ENCODE measurements at regions of chr12 and their contacts with region 1.

Region 1: DNA sequence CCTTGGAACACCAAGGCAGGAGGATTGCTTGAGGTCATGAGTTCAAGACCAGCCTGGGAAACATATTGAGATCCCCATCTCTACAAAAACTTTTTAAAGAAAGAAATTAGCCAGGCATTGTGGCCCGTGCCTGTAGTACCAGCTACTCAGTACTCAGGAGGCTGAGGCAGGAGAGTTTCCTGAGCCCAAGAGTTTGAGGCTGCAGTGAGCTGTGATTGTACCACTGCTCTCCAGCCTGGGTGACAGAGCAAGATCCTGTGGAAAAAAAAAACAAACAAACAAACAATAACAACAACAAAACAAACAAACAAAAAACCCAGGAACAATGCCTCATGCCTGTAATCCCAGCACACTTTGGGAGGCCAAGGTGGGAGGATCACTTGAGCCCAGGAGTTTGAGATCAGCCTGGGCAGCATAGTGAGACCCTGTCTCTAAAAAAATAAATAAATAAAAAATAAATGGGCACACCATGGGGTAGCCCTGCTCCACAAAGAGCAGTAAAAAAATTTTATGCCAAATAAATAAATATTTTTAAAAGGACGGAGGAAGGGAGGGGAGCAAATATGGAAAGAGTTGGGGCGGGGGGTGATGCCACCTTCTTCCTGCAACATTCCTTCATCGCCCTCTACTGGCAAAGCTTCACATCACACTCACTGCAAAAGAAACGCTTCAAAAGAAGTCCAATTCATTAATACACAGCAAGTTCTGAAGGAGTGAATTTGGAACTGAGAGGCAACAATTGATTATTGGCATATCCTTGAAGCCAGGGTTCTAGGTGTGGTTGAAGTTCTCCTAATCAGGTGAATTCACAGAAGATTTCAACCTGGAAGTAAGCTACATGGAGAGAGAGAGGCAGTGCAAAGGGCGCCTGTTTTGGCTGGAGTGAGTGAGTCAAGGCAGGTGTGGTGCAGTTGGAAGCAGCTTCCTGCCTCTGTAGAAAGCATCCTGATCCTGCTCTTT is 8.8 kb upstream of the GNPTAB start:
- DNase-seq: peak; percentile 47 to 85 (median 73)
- ATAC-seq: peak; percentile 87
- H3K4me3 ChIP-seq: no peak overlapping the region
- H3K4me3 Mint-ChIP-seq: no peak overlapping the region
- H3K27ac ChIP-seq: no peak overlapping the region
- H3K27ac Mint-ChIP-seq: no peak overlapping the region
- H3K4me1 ChIP-seq: peaks cover 12% of the 10 kb centered on the region
- H3K4me1 Mint-ChIP-seq: peaks cover 12% of the 10 kb centered on the region
- H3K27me3 ChIP-seq: no peaks in the 10 kb centered on the region
- H3K27me3 Mint-ChIP-seq: no peaks in the 10 kb centered on the region
- CTCF ChIP-seq: peak; percentile 93

Region 2: GRCh38 chr12:101414533-101415119 is 425.0 kb before region 1 on chr12:
- CTCF ChIA-PET with region 1: interaction called, 7 read pairs
- POLR2A ChIA-PET with region 1: no interaction called
- intact Hi-C with region 1: loop called (anchors 1 to 5 kb)
- DNase-seq: peak in 2 of 9 experiments; percentile 46 to 52
- ATAC-seq: no peak
- H3K4me3 ChIP-seq: no peak overlapping the region
- H3K4me3 Mint-ChIP-seq: no peak overlapping the region
- H3K27ac ChIP-seq: no peak overlapping the region
- H3K27ac Mint-ChIP-seq: no peak overlapping the region
- H3K4me1 ChIP-seq: no peaks in the 10 kb centered on the region
- H3K4me1 Mint-ChIP-seq: no peaks in the 10 kb centered on the region
- H3K27me3 ChIP-seq: no peaks in the 10 kb centered on the region
- H3K27me3 Mint-ChIP-seq: peaks cover 5% of the 10 kb centered on the region
- CTCF ChIP-seq: peak; percentile 64

Region 3: DNA sequence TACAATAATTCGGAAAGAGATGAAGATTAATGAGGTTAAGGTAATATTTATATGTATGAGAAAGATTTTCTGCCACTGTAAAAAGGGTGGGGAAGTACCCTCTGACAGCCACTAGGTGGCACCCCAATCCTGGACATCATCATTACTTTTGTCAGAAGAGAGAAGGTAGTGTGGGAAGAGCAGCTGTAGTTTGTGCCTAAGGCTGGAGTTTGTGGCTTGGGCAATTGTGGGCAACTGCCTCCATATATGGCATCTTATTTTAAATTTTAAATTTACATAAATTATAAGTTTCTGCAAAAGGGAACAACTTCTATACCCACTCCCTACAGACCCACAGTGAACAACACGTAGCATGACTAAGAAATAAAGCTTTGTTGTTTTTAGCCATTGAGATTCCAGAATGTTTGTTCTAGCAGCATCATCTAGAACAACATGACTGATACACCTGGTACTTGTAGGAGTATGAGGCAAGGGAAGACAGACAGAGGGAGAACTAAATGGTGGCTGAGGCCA is 65.9 kb before region 1 on chr12:
- CTCF ChIA-PET with region 1: interaction called, 182 read pairs
- POLR2A ChIA-PET with region 1: interaction called, 6 read pairs
- intact Hi-C with region 1: loop called (anchors 1 kb)
- DNase-seq: peak; percentile 43 to 83 (median 70)
- ATAC-seq: peak; percentile 96
- H3K4me3 ChIP-seq: no peak overlapping the region
- H3K4me3 Mint-ChIP-seq: no peak overlapping the region
- H3K27ac ChIP-seq: no peak overlapping the region
- H3K27ac Mint-ChIP-seq: no peak overlapping the region
- H3K4me1 ChIP-seq: no peaks in the 10 kb centered on the region
- H3K4me1 Mint-ChIP-seq: no peaks in the 10 kb centered on the region
- H3K27me3 ChIP-seq: no peaks in the 10 kb centered on the region
- H3K27me3 Mint-ChIP-seq: no peaks in the 10 kb centered on the region
- CTCF ChIP-seq: peak; percentile 95

Region 4: DNA sequence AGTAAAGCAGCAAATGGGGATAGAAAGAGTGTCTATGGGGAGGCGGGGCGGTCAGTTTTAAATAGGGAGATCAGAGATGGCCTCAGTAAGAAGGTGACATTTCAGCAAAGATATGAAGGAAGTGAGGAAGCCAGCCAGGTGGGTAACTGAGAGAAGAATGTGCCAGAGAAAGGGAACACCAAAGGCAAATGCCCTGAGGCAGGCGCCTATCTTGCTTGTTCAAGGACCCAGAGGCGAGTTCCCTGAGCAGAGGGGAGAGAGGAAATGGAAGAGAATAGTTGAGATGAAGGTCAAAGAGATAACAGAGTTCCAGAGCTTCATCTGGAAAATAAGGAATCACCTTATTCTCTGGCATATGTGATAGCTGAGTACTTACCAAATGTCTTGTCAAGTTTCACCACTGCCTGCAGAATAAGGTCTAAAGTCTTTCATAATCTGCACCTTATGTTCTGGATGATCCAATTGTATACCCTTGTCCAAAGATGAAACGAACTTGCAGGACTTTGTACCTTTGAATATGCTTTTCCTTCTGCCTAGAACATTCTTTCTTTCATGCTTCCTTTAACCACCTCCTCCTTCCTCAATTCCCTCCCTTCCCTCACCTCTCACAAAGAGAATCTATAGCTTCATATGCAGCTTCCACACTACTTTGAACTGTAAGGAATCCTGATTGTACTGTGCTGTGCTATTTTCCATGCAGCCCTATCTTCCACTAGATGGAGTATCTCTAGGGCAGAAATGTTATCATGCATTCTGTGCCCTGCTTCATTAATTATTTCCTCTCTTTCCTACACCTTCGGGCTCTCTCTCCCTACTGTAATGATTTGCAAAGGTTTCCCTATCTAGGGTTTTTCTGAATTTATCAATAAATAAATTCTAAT is 47.3 kb before region 1 on chr12:
- CTCF ChIA-PET with region 1: interaction called, 22 read pairs
- POLR2A ChIA-PET with region 1: no interaction called
- intact Hi-C with region 1: loop called in 1 of 2 experiments (anchors 1 kb)
- DNase-seq: peak in 2 of 9 experiments; percentile 22 to 43
- ATAC-seq: peak; percentile 38
- H3K4me3 ChIP-seq: no peak overlapping the region
- H3K4me3 Mint-ChIP-seq: no peak overlapping the region
- H3K27ac ChIP-seq: peak overlapping the region in 1 of 2 experiments; percentile 47
- H3K27ac Mint-ChIP-seq: no peak overlapping the region
- H3K4me1 ChIP-seq: peaks cover 10% of the 10 kb centered on the region
- H3K4me1 Mint-ChIP-seq: peaks cover 30% of the 10 kb centered on the region
- H3K27me3 ChIP-seq: no peaks in the 10 kb centered on the region
- H3K27me3 Mint-ChIP-seq: no peaks in the 10 kb centered on the region
- CTCF ChIP-seq: no peak

Region 5: GRCh38 chr12:101863981-101864380 is 24.4 kb after region 1 on chr12:
- CTCF ChIA-PET with region 1: interaction called, 13 read pairs
- POLR2A ChIA-PET with region 1: no interaction called
- intact Hi-C with region 1: no loop called
- DNase-seq: no peak
- ATAC-seq: no peak
- H3K4me3 ChIP-seq: no peak overlapping the region
- H3K4me3 Mint-ChIP-seq: no peak overlapping the region
- H3K27ac ChIP-seq: no peak overlapping the region
- H3K27ac Mint-ChIP-seq: no peak overlapping the region
- H3K4me1 ChIP-seq: no peaks in the 10 kb centered on the region
- H3K4me1 Mint-ChIP-seq: no peaks in the 10 kb centered on the region
- H3K27me3 ChIP-seq: no peaks in the 10 kb centered on the region
- H3K27me3 Mint-ChIP-seq: no peaks in the 10 kb centered on the region
- CTCF ChIP-seq: no peak

Region 6: DNA sequence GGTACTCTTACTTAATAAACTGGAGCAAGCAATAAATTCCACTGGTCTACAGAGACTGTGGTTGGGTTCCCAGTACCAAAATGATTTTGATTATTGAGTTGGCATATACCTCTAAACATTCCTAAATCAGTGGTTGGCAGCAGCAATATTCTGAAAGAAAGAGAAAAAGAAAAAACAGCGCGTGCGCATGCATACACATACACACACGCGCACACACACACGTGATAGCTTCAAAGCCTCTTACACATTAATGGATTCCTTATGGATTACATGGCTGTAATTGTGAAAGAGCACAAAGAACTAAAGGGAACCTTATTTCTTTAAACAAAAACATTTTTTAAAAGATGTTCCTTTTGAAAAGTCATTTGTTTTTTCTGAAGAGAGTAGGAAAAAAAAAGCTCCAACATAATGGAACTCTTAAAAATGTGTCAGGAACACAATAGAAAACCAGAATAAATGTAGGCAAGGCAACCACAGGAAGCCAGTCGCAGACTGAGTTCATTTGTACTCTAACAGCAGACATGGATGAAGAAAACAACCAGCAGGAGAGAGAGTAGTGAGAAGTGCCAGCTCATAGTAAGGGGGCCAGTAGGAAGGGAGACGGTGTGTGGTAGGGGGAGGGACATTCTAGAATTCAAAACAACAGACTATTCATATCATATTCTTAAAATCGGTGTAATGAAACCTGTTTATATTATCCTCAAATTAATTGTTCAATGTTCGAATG is 117.8 kb after region 1 on chr12:
- CTCF ChIA-PET with region 1: no interaction called
- POLR2A ChIA-PET with region 1: no interaction called
- intact Hi-C with region 1: no loop called
- DNase-seq: no peak
- ATAC-seq: no peak
- H3K4me3 ChIP-seq: no peak overlapping the region
- H3K4me3 Mint-ChIP-seq: no peak overlapping the region
- H3K27ac ChIP-seq: no peak overlapping the region
- H3K27ac Mint-ChIP-seq: no peak overlapping the region
- H3K4me1 ChIP-seq: no peaks in the 10 kb centered on the region
- H3K4me1 Mint-ChIP-seq: no peaks in the 10 kb centered on the region
- H3K27me3 ChIP-seq: no peaks in the 10 kb centered on the region
- H3K27me3 Mint-ChIP-seq: no peaks in the 10 kb centered on the region
- CTCF ChIP-seq: no peak

Region 7: GRCh38 chr12:102095675-102096263 is 256.2 kb after region 1 on chr12:
- CTCF ChIA-PET with region 1: no interaction called
- POLR2A ChIA-PET with region 1: no interaction called
- intact Hi-C with region 1: no loop called
- DNase-seq: peak in 2 of 9 experiments; percentile 9 to 16
- ATAC-seq: no peak
- H3K4me3 ChIP-seq: no peak overlapping the region
- H3K4me3 Mint-ChIP-seq: no peak overlapping the region
- H3K27ac ChIP-seq: no peak overlapping the region
- H3K27ac Mint-ChIP-seq: no peak overlapping the region
- H3K4me1 ChIP-seq: no peaks in the 10 kb centered on the region
- H3K4me1 Mint-ChIP-seq: no peaks in the 10 kb centered on the region
- H3K27me3 ChIP-seq: no peaks in the 10 kb centered on the region
- H3K27me3 Mint-ChIP-seq: no peaks in the 10 kb centered on the region
- CTCF ChIP-seq: peak; percentile 32

Region 8: GRCh38 chr12:102388469-102388868 is 548.9 kb after region 1 on chr12:
- CTCF ChIA-PET with region 1: no interaction called
- POLR2A ChIA-PET with region 1: no interaction called
- intact Hi-C with region 1: no loop called
- DNase-seq: no peak
- ATAC-seq: no peak
- H3K4me3 ChIP-seq: no peak overlapping the region
- H3K4me3 Mint-ChIP-seq: no peak overlapping the region
- H3K27ac ChIP-seq: no peak overlapping the region
- H3K27ac Mint-ChIP-seq: no peak overlapping the region
- H3K4me1 ChIP-seq: no peaks in the 10 kb centered on the region
- H3K4me1 Mint-ChIP-seq: no peaks in the 10 kb centered on the region
- H3K27me3 ChIP-seq: no peaks in the 10 kb centered on the region
- H3K27me3 Mint-ChIP-seq: peaks cover 20% of the 10 kb centered on the region
- CTCF ChIP-seq: no peak

Region 9: GRCh38 chr12:103175617-103176016 is 1336.0 kb after region 1 on chr12:
- CTCF ChIA-PET with region 1: no interaction called
- POLR2A ChIA-PET with region 1: no interaction called
- intact Hi-C with region 1: no loop called
- DNase-seq: no peak
- ATAC-seq: no peak
- H3K4me3 ChIP-seq: no peak overlapping the region
- H3K4me3 Mint-ChIP-seq: no peak overlapping the region
- H3K27ac ChIP-seq: no peak overlapping the region
- H3K27ac Mint-ChIP-seq: no peak overlapping the region
- H3K4me1 ChIP-seq: no peaks in the 10 kb centered on the region
- H3K4me1 Mint-ChIP-seq: no peaks in the 10 kb centered on the region
- H3K27me3 ChIP-seq: no peaks in the 10 kb centered on the region
- H3K27me3 Mint-ChIP-seq: no peaks in the 10 kb centered on the region
- CTCF ChIP-seq: no peak